ENCODE measurements at regions of chr6 and their contacts with region 1.

Region 1: DNA sequence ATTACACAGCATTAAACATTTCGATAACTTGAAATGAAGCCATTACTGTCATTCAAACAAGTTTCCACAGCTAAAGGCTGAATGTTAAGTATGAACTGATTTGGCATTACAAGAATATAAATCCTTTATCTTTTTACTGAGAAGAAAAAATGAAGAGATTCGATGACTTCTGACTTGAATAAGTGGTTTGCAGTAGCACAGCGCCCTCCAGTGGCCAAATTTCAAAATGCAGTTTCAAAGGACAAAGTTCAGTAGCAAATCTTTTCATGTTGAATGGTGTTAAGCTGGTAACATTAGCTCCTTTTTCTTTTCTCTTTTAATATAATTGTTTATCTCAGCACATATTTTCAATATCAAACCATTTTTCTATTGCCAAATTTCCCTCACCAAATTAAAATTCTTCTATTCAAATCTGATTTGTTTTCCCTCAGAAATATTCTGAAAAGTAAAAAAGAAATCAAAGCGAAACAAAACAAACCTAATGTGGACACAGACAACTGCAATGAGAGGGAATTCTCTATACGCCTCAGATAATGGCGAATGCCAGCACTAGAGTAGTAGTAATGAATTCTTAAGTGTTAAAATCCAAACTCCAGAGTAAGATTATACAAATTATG is 145.7 kb downstream of the BTBD9 start:
- DNase-seq: peak; percentile 93
- H3K4me3 Mint-ChIP-seq: no peak overlapping the region
- H3K27ac Mint-ChIP-seq: no peak overlapping the region
- H3K4me1 Mint-ChIP-seq: peaks cover 4% of the 10 kb centered on the region
- H3K27me3 Mint-ChIP-seq: no peaks in the 10 kb centered on the region

Region 2: GRCh38 chr6:38034274-38034914 is 459.6 kb before region 1 on chr6:
- intact Hi-C with region 1: loop called (anchors 10 kb)
- DNase-seq: peak; percentile 58
- H3K4me3 Mint-ChIP-seq: no peak overlapping the region
- H3K27ac Mint-ChIP-seq: no peak overlapping the region
- H3K4me1 Mint-ChIP-seq: peaks cover 20% of the 10 kb centered on the region
- H3K27me3 Mint-ChIP-seq: no peaks in the 10 kb centered on the region

Region 3: GRCh38 chr6:38671885-38672467 is 177.9 kb after region 1 on chr6:
- intact Hi-C with region 1: loop called (anchors 5 kb)
- DNase-seq: peak; percentile 81
- H3K4me3 Mint-ChIP-seq: no peak overlapping the region
- H3K27ac Mint-ChIP-seq: no peak overlapping the region
- H3K4me1 Mint-ChIP-seq: peaks cover 27% of the 10 kb centered on the region
- H3K27me3 Mint-ChIP-seq: no peaks in the 10 kb centered on the region

Region 4: DNA sequence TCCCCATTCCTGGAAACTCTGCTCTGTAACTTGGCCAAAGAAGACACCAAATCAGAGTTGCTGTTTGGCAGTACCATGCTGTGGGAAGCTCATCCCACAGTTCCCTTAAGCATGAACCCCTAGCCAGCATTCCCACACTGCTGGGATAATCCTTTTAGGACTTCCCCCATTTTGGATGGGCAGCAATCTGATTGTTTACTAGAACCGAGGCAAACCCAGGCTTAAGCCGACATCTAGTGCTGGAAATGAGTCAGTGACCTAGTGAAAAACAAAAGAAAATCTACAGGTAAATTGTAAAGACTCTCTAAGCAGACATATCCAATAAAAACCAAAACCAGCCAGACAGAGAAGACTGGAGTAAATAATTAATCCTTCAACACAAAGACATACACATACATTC is 226.3 kb after region 1 on chr6:
- intact Hi-C with region 1: no loop called
- DNase-seq: peak; percentile 67
- H3K4me3 Mint-ChIP-seq: no peak overlapping the region
- H3K27ac Mint-ChIP-seq: no peak overlapping the region
- H3K4me1 Mint-ChIP-seq: peaks cover 5% of the 10 kb centered on the region
- H3K27me3 Mint-ChIP-seq: peaks cover 29% of the 10 kb centered on the region